ENCODE measurements at regions of chr3 and their contacts with region 1.

Region 1: GRCh38 chr3:8970971-8971589 is 7.8 kb upstream of the RAD18 start:
- DNase-seq: no peak
- H3K4me3 ChIP-seq: no peak overlapping the region
- H3K27ac ChIP-seq: no peak overlapping the region
- H3K4me1 ChIP-seq: peaks cover 4% of the 10 kb centered on the region
- H3K27me3 ChIP-seq: peaks cover 24% of the 10 kb centered on the region
- CTCF ChIP-seq: no peak

Region 2: GRCh38 chr3:8822141-8822540 is 148.9 kb before region 1 on chr3:
- intact Hi-C with region 1: no loop called
- DNase-seq: no peak
- H3K4me3 ChIP-seq: no peak overlapping the region
- H3K27ac ChIP-seq: no peak overlapping the region
- H3K4me1 ChIP-seq: no peaks in the 10 kb centered on the region
- H3K27me3 ChIP-seq: no peaks in the 10 kb centered on the region
- CTCF ChIP-seq: no peak

Region 3: GRCh38 chr3:9302425-9303181 is 331.5 kb after region 1 on chr3:
- intact Hi-C with region 1: loop called (anchors 1 kb)
- DNase-seq: peak; percentile 72
- H3K4me3 ChIP-seq: peak overlapping the region; percentile 53
- H3K27ac ChIP-seq: no peak overlapping the region
- H3K4me1 ChIP-seq: peaks cover 5% of the 10 kb centered on the region
- H3K27me3 ChIP-seq: no peaks in the 10 kb centered on the region
- CTCF ChIP-seq: peak; percentile 92